Breast epithelium (tissue), 4 donors: ENCODE measurements at regions of chr12 and their contacts with region 1.

Region 1: DNA sequence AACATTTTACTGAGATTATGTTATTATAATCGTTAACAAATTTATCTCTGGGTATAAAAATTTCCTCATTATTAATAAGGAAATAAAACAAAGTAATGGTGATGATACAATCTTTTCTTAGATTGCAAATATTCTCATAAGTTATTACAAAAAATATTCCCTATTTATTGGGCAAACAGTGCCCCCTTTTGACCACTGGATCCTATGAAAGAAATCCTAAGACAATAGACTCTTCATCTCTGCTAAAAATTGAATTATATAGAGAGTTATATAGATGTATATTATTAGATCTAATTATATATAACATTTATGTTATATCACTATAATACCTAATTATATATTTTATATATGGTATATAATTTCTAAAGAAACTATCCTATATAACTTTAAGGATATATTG is 94.2 kb upstream of the FGD4 start:
- DNase-seq: no peak
- H3K4me3 ChIP-seq: no peak overlapping the region
- H3K27ac ChIP-seq: no peak overlapping the region
- H3K4me1 ChIP-seq: no peaks in the 10 kb centered on the region
- H3K27me3 ChIP-seq: no peaks in the 10 kb centered on the region
- CTCF ChIP-seq: peak in 2 of 3 donors; percentile 26 to 35
- POLR2A ChIP-seq: no peak

Region 2: DNA sequence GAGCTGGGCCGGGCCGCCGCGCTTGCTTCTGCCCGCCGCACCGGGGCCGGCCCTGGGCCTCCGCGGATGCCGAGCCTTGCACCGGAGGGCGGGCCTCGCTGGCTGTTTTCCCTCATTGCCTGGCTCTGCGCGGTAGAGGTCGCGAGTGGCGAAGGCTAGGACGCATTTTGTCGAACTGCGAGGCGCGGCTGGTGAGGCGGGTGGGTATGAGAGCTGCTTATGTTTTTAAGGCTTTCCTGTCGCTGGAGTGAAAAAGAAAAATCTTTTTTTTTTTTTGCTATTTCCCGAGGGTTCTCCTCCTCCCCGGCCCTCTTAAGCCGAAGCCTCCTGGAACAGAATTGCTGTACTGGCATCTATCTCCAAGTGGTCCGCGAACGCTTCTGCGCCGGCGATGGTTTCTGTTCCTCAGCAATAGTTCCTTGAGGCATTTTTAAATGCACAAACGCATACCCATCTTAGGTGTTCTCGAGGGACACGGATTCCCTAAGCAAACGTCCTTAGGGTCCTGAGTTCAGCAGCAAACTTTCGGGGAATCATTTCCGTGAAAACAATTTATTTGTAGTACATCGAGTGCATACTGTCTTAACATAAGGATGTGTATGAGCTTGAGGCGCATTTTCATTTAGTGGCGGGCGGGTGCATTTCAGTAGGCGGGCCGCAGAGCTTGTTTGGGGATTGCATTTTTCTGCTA is 345.3 kb before region 1 on chr12:
- intact Hi-C with region 1: loop called (anchors 5 kb)
- DNase-seq: peak; percentile 37 to 65
- H3K4me3 ChIP-seq: peak overlapping the region; percentile 70 to 73 (median 73)
- H3K27ac ChIP-seq: peak overlapping the region; percentile 89 to 96
- H3K4me1 ChIP-seq: peaks cover 5 to 9% of the 10 kb centered on the region in 2 donors
- H3K27me3 ChIP-seq: no peaks in the 10 kb centered on the region
- CTCF ChIP-seq: peak in 1 of 3 donors; percentile 10
- POLR2A ChIP-seq: no peak